ENCODE measurements at regions of chr2 and their contacts with region 1.

Region 1: DNA sequence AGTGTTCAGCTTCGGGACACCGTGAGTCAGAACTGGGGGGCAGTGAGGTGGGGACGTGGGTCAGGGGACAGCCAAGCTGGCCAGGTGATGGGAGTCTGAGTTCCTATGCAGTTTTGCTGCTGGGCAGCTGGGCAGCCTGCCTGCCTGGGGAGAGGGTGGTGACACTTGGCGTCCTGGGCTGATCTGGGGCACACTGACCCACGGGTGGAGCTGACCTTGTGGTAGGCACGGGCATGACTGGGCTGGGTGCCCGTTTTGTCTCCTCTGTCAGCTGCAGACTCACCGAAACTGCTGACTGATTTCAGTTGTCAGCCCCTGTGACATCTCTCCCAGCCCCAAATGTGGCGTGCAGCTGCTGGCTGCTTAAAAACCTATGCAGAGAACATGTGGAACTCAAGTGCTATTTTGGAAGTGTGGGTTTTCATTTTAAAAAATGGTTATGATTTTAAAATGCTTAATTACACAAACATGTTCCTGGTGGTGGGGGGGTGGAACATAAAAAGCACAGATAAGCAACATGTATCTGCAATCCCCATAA is 32.7 kb upstream of the E2F6 start:
- DNase-seq: peak; percentile 86 to 88
- ATAC-seq: peak; percentile 89 to 98 (median 96)
- H3K4me3 ChIP-seq: no peak overlapping the region
- H3K27ac ChIP-seq: peak overlapping the region in 9 of 10 donors; percentile 39 to 89 (median 82)
- H3K4me1 ChIP-seq: peaks cover 0 to 39% (median 16%) of the 10 kb centered on the region in 9 donors
- H3K27me3 ChIP-seq: peaks cover 0 to 7% (median 0%) of the 10 kb centered on the region in 7 donors
- CTCF ChIP-seq: no peak

Region 2: DNA sequence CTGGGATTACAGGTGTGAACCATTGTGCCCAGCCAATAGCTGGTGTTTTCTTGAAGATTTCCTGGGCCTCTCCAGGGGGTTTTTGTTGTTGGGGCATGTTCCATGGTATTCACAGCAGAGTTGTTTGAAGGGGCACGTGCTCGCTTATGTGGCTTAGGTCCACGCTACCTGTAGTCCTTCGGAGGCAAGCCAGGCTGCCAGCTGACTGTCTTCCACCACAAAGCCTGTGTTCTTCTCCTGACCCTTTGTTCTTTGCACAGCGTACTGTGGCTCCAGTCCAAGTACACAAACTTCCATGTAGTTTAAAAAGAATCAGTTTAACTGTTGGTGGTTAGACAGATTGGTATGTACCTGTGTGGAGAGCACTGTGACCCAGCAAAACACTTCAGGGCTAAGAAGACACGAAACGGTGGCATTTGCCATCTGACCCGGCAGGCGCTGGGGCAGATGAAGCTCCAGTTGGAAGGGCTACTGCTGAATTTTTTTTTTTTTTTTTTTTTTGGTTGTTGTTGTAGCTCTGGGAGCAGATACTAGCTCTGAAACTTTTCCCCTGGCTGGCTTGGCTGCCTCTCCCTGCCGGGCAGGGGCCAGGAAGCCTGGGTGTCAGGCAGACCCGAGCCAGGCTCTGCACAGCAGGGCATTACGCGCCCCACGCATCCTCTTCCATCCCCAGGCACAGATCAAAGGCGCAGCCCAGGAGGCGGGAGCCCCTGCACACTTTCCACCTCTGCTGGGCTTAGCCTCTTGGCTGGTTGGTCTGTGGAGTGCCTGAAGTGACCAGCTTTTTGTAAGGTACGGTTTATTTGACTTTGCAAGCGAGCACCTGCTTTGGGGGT is 40.9 kb after region 1 on chr2:
- intact Hi-C with region 1: loop called in 1 of 10 experiments (anchors 5 kb)
- DNase-seq: no peak
- ATAC-seq: peak in 7 of 8 donors; percentile 4 to 80 (median 50)
- H3K4me3 ChIP-seq: no peak overlapping the region
- H3K27ac ChIP-seq: no peak overlapping the region
- H3K4me1 ChIP-seq: peaks cover 0 to 19% (median 7%) of the 10 kb centered on the region in 9 donors
- H3K27me3 ChIP-seq: peaks cover 0 to 7% (median 0%) of the 10 kb centered on the region in 7 donors
- CTCF ChIP-seq: no peak